HEK293T (cell line): ENCODE measurements at regions of chr10 and their contacts with region 1.

Region 1: DNA sequence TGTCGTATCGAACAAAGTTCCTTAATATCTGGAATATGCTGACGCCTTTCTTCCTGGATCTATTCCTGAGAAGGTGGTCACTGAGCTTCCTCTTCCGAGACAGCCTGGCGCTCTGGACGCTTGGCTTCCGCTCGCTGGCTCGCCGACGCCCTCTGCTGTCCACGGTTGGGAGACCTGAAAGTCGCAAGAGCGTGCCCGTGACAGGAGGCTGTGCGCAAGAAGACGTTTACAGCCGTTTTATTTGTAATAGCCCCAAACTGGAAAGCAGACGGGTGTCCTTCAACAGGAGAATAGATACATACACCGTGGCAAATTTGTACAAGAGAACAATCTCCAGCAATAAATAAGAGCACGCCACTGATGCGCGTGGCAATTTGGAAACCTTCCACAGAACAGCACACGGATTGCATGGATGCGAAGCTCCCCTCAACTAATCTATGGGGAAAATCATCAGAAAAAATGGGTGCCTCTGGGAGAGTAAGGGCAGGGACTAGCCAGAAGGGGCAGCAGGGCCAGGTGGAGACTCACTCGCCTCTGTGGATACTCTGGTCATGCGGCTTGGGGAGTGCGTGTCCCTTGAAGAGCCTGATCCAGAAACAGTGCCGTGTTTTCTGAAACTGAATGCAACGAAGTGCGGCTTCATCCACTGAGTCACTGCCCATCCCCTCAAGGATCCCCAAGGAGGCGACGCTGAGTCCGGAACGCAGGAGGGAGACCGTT is 41.5 kb upstream of the BNIP3 start:
- DNase-seq: peak; percentile 92

Region 2: GRCh38 chr10:131885391-131886161 is 137.7 kb before region 1 on chr10:
- CTCF ChIA-PET with region 1: interaction called, 10 read pairs
- POLR2A ChIA-PET with region 1: no interaction called
- DNase-seq: peak; percentile 91

Region 3: DNA sequence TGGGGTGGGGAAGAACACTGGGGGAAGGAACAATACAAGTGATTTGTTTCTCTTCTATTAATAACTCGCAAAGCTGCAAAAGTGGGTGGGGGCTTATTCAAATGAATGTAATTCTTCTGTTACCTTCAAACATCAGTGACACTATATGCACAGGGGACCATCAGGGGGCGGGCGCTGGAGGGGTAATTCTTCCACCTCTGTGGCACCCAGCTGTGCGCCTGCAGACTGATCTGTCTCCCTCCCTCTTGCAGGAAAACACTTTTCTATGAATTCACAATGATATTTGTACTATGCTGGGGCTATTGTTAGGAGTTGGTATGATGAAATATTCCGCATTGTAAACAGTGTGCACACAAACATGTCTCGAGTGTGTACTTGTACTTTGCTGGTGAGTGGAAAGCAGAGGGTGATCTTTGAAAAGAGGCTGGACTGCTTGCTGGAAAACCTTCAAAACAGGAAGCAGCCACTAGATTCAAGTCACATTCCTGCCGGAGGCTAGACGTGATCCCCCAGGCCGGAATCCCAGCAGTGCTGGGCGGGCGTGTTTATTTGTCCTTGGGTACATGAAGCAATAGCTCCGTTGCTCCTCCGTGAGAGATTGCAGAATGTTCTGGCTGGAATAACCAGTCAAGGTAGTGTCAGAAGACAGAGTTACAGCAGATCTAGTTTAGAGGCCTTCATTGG is 25.7 kb before region 1 on chr10:
- CTCF ChIA-PET with region 1: interaction called, 14 read pairs
- POLR2A ChIA-PET with region 1: no interaction called
- DNase-seq: no peak

Region 4: GRCh38 chr10:132011024-132011423 is 12.2 kb before region 1 on chr10:
- CTCF ChIA-PET with region 1: interaction called, 10 read pairs
- POLR2A ChIA-PET with region 1: no interaction called
- DNase-seq: no peak

Region 5: DNA sequence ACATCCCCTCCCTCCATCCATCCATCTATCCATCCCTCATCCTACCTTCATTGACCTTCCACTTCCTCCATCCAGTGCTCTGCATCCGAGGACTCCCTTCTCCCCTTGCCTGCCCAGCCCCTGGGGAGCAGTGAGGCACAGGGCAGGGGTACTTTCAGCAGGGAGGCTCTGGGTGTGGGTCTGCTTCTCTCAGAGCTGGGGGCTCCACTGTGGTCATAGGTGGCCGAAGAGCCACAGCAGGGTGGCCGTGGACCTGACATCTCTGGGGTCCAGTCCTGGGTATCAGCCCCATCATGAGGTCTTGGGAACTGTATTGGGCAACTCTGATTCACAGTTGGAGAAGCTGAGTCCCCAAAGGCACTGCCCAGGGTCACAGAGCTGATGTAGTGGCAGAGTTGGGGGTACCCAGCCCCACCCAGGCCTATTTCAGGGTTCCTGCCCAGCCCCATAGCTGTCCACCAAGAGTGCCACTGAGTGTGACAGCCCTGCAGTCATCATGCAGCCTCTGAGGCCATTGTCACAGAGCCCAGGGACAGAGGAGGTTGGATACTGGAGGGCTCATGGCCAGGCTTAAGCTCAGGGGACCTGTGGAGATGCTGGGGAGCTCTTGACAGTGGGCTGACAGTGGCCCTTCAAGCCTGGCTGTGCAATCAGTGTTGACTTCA is 128.2 kb after region 1 on chr10:
- CTCF ChIA-PET with region 1: no interaction called
- POLR2A ChIA-PET with region 1: no interaction called
- DNase-seq: no peak